K562 (cell line): ENCODE measurements at regions of chr22 and their contacts with region 1.

Region 1: GRCh38 chr22:45584121-45584570 is 81.5 kb downstream of the FBLN1 start:
- DNase-seq: no peak
- ATAC-seq: no peak
- H3K4me3 ChIP-seq: no peak overlapping the region
- H3K27ac ChIP-seq: no peak overlapping the region
- H3K4me1 ChIP-seq: peaks cover 0 to 5% of the 10 kb centered on the region in 2 experiments; a peak in 2 of 5 replicates
- H3K27me3 ChIP-seq: peaks cover 9 to 88% of the 10 kb centered on the region in 2 experiments; a peak in 4 of 5 replicates
- CTCF ChIP-seq: no peak
- EP300 ChIP-seq: no peak
- POLR2A ChIP-seq: no peak
- RAD21 ChIP-seq: no peak

Region 2: DNA sequence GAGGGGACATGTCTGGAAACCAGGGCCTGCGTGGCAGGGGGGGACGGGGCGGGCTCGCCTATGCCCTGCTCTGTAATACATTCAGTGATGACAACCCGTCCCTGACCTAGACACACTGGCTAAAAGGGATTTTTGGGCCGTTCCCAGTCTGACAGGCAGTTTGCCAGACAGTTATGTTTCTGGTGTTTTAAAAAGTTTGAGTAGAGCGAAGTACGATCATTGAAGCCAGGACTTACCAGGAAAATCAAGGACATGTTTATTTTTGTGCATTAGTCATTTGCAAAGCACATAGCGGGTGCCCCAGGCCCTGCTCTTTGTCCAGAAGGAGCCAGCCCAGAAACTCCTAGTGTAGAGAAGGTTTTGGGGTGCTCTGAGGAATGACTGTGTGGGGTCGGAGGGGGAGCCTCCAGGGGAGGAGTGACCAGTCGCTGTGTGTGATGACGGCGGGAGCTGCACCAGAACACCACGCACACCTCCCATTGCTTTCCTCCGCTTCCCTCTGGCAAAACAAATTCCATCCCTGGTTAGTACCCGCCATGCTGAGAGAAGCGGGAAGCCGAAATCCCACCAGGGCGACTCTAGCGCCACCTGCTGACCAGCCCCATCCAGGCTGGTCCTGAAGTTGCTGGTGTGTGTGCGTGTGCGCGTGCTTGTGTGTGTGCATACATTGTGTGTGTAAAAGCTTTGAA is 30.7 kb before region 1 on chr22:
- CTCF ChIA-PET with region 1: no interaction called
- POLR2A ChIA-PET with region 1: no interaction called
- in situ Hi-C with region 1: no loop called
- intact Hi-C with region 1: no loop called
- DNase-seq: peak; percentile 63 to 69 (median 68)
- ATAC-seq: peak; percentile 85
- H3K4me3 ChIP-seq: no peak overlapping the region
- H3K27ac ChIP-seq: no peak overlapping the region
- H3K4me1 ChIP-seq: peaks cover 0 to 7% of the 10 kb centered on the region in 2 experiments; a peak in 2 of 5 replicates
- H3K27me3 ChIP-seq: peaks cover 2 to 8% of the 10 kb centered on the region in 2 experiments; a peak in 1 of 5 replicates
- CTCF ChIP-seq: peak; percentile 79 to 90 (median 84)
- EP300 ChIP-seq: no peak
- POLR2A ChIP-seq: no peak
- RAD21 ChIP-seq: peak; percentile 41 to 79

Region 3: DNA sequence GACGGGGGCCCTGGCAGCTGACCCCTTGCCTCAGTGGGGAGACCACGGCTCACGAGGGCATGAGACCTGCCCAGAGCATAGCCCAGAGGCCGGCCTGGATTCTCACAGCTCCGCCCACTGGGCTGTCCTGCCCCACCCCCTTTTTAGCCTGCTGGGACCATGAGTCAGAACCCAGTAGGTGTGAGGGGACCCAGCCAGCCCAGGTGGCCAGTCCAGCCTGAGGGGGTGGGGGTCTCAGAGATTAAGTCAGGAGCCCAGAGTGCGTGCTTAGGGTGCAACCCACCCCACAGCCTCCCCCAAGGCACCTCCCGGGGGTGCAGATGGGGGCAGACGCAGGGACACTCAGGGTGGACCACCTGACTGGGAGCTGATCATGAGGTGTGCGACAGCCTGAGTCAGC is 526.1 kb after region 1 on chr22:
- CTCF ChIA-PET with region 1: no interaction called
- POLR2A ChIA-PET with region 1: no interaction called
- in situ Hi-C with region 1: loop called (anchors 5 kb)
- intact Hi-C with region 1: loop called (anchors 10 kb)
- DNase-seq: peak; percentile 51 to 58 (median 54)
- ATAC-seq: peak; percentile 78
- H3K4me3 ChIP-seq: no peak overlapping the region
- H3K27ac ChIP-seq: no peak overlapping the region
- H3K4me1 ChIP-seq: peaks cover 0 to 78% of the 10 kb centered on the region in 2 experiments; a peak in 2 of 5 replicates
- H3K27me3 ChIP-seq: no peaks in the 10 kb centered on the region
- CTCF ChIP-seq: no peak
- EP300 ChIP-seq: no peak
- POLR2A ChIP-seq: no peak
- RAD21 ChIP-seq: no peak